ENCODE measurements at regions of chr4 and their contacts with region 1.

Region 1: DNA sequence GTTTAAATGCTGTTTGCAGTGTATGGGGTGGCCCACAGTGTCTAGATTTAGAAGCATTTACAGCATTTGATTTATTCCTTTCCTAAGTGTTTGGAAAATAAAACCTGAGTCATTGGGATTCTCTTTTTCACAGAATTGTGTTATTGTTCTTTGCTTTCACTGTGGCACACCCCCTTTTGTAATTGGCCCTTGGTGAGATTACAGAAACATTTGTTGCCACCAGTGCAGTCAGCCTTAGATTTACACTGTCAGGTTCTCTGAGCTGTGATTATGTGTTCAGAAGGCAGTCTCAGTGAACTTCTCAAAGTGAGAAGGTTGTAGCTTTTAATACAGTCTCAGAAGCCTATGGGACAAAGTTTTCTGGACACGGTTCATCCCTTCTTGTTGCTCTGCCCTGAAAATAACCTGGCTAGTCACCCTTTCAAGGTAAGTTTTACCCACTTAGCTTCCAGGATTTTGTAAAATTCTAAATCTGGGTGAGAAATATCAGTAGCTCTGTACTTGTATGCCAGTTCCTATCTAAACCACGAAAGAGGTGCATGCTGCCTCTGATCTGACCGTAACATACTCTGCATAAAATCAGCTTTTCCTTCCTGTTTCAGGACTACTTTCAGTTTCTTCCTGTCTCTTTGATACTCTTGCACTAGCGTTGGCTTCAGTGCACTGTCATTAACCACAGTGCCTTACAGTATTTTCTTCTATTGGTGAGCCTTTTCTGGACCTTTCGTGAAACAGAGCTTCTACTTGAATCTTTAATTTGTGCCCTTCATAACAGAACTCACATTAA is 12.6 kb downstream of the RUFY3 start:
- DNase-seq: peak; percentile 87
- H3K4me3 ChIP-seq: peak overlapping the region; percentile 63
- H3K27ac ChIP-seq: peak overlapping the region; percentile 75
- H3K4me1 ChIP-seq: peaks cover 53% of the 10 kb centered on the region
- CTCF ChIP-seq: no peak

Region 2: DNA sequence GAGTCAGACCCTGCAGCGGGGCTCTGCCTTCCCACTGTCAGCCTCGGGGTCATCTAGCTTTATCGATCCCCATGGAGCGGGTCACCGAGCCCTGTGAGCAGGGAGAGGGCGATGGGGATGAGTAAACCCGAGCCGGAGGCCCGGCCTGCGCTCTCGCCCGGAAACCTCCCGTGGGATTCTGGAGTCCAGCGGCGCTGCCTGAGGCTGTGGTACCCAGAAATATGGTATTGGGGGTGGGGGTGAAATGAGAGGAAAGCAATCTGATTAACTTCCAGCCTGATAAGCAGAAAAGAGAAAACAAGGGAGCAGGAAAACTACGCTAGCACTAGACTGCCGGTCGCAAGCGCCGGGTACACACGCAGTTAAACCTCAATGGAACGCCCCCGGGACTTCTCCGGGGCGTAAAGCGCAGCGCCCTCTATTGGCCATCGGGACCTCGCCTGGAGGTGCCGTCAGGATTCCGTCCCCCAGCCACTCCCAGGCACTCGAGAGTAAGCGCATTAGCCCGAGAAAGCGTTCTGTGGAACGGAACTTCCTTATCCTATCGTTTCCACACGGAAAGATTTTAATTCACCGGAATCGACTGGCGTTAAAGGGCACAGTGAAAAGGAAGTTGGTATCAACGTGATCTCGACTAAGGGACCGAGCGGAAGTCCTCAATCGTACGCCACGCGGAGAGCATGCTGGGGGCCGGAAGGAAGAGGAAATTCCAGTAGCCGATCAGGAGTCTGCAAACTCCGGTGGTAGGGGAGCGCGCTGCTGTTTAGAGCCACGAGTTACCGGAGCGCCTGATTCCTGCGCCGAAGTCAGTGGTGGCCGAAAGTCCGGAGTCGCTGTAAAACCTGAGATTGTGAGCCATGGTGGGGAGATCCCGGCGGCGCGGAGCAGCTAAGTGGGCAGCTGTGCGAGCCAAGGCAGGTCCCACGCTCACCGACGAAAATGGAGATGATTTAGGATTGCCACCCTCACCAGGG is 46.3 kb before region 1 on chr4 and contains the start of gene UTP3:
- CTCF ChIA-PET with region 1: no interaction called
- POLR2A ChIA-PET with region 1: interaction called, 19 read pairs
- intact Hi-C with region 1: no loop called
- DNase-seq: peak; percentile 96
- H3K4me3 ChIP-seq: peak within 1 kb of the TSS; percentile 88
- H3K27ac ChIP-seq: peak within 1 kb of the TSS; percentile 84
- H3K4me1 ChIP-seq: peaks cover 60% of the 10 kb centered on the region
- CTCF ChIP-seq: peak; percentile 99
- total RNA-seq, gene UTP3: 34.0 and 51.5 TPM in 2 replicates

Region 3: GRCh38 chr4:70714079-70714887 is 20.1 kb before region 1 on chr4:
- CTCF ChIA-PET with region 1: no interaction called
- POLR2A ChIA-PET with region 1: interaction called, 15 read pairs
- intact Hi-C with region 1: loop called (anchors 2 kb)
- DNase-seq: no peak
- H3K4me3 ChIP-seq: peak overlapping the region; percentile 45
- H3K27ac ChIP-seq: peak overlapping the region; percentile 40
- H3K4me1 ChIP-seq: peaks cover 56% of the 10 kb centered on the region
- CTCF ChIP-seq: no peak

Region 4: GRCh38 chr4:70749313-70749712 is 15.0 kb after region 1 on chr4:
- CTCF ChIA-PET with region 1: interaction called, 8 read pairs
- POLR2A ChIA-PET with region 1: interaction called, 38 read pairs
- intact Hi-C with region 1: loop called (anchors 2 kb)
- DNase-seq: no peak
- H3K4me3 ChIP-seq: no peak overlapping the region
- H3K27ac ChIP-seq: no peak overlapping the region
- H3K4me1 ChIP-seq: peaks cover 45% of the 10 kb centered on the region
- CTCF ChIP-seq: no peak

Region 5: GRCh38 chr4:70759627-70760026 is 25.3 kb after region 1 on chr4:
- CTCF ChIA-PET with region 1: no interaction called
- POLR2A ChIA-PET with region 1: interaction called, 37 read pairs
- intact Hi-C with region 1: loop called (anchors 2 kb)
- DNase-seq: no peak
- H3K4me3 ChIP-seq: no peak overlapping the region
- H3K27ac ChIP-seq: no peak overlapping the region
- H3K4me1 ChIP-seq: peaks cover 30% of the 10 kb centered on the region
- CTCF ChIP-seq: no peak; the same call in 1 of the 2 replicates

Region 6: DNA sequence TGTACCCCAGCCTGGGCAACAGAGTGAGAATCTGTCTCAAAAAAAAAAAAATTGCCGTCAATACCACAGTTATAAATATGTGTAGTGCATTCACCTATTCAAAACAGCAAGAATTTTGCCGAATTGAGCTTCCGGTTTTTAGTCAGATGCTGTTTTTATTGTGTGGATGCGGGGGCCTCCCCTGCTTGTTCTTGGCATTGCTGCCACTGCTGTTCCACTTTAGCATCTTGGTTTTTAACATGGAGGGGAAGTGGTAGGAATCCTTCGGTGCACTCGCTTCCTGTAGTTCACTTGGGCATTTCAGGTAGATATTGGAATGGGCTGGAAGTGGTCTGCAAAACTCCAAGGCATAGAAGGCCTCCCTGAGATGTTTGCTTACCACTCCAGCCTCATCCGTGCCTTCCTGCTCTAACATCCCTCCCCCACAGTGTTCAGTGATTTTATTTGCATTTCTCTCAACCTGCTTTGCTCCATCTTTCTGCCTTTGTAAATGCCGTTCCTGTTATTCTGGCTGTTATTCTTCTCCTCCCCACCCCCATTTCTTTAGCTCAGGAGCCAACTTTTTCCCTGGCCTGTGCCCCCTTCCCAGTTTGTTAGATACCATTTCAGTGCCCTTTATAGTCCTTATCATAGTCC is 193.3 kb after region 1 on chr4:
- CTCF ChIA-PET with region 1: no interaction called
- POLR2A ChIA-PET with region 1: interaction called, 4 read pairs
- intact Hi-C with region 1: loop called (anchors 10 kb)
- DNase-seq: peak; percentile 81
- H3K4me3 ChIP-seq: peak overlapping the region; percentile 63
- H3K27ac ChIP-seq: peak overlapping the region; percentile 88
- H3K4me1 ChIP-seq: peaks cover 94% of the 10 kb centered on the region
- CTCF ChIP-seq: peak; percentile 48